ENCODE measurements at regions of chr1 and their contacts with region 1.

Region 1: GRCh38 chr1:167715157-167715999 is 6.4 kb upstream of the MPZL1 start:
- DNase-seq: peak; percentile 70 to 94 (median 83)
- ATAC-seq: peak; percentile 58 to 64 (median 61)
- H3K4me3 ChIP-seq: peak overlapping the region; percentile 70 to 91
- H3K4me3 Mint-ChIP-seq: peak overlapping the region; percentile 82 to 87 (median 83)
- H3K27ac ChIP-seq: peak overlapping the region; percentile 39
- H3K27ac Mint-ChIP-seq: peak overlapping the region; percentile 79 to 91
- H3K4me1 ChIP-seq: peaks cover 15 to 30% of the 10 kb centered on the region in 2 experiments
- H3K4me1 Mint-ChIP-seq: peaks cover 43 to 48% (median 46%) of the 10 kb centered on the region in 3 donors
- H3K27me3 ChIP-seq: no peaks in the 10 kb centered on the region
- H3K27me3 Mint-ChIP-seq: peaks cover 0 to 6% of the 10 kb centered on the region in 2 donors

Region 2: GRCh38 chr1:166838766-166839599 is 876.4 kb before region 1 on chr1 and contains the start of gene POGK:
- CTCF ChIA-PET with region 1: no interaction called
- POLR2A ChIA-PET with region 1: no interaction called
- DNase-seq: peak; percentile 47 to 88 (median 68)
- ATAC-seq: peak; percentile 92
- H3K4me3 ChIP-seq: peak within 1 kb of the TSS; percentile 61 to 76
- H3K4me3 Mint-ChIP-seq: peak within 1 kb of the TSS; percentile 86 to 94 (median 89)
- H3K27ac ChIP-seq: peak within 1 kb of the TSS; percentile 91
- H3K27ac Mint-ChIP-seq: peak within 1 kb of the TSS; percentile 97 to 98
- H3K4me1 ChIP-seq: peaks cover 10 to 38% of the 10 kb centered on the region in 2 experiments
- H3K4me1 Mint-ChIP-seq: peaks cover 45 to 50% (median 48%) of the 10 kb centered on the region in 3 donors
- H3K27me3 ChIP-seq: no peaks in the 10 kb centered on the region
- H3K27me3 Mint-ChIP-seq: no peaks in the 10 kb centered on the region
- total RNA-seq, gene POGK: 26.2 to 45.9 (median 43.2) TPM

Region 3: DNA sequence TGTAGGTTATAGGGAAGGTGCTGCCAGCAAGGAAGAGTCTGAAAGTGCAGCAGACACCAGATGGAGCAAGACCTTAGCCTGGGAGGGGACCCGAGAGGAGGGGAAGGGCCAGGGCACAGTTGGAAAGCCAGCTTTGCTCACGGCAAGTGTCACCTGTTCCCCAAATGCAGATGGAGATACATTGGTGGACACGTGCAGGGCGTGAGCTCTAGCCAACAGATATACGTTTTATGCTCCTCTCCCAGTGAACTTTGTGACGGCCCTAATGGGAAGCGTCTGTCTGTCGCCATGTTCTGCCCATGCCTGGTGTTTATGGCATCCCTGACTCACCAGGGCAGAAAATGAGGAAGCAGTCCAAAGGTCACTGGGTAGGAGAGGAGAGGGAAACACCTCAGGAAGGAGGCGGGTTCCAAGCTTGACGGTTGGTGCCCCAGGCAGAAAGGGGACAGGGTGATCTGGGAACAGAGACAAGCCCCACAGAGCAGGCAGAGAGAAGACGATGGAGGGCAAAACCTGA is 632.8 kb before region 1 on chr1:
- CTCF ChIA-PET with region 1: no interaction called
- POLR2A ChIA-PET with region 1: interaction called in 1 of 2 experiments, 10 read pairs
- DNase-seq: no peak
- ATAC-seq: no peak
- H3K4me3 ChIP-seq: no peak overlapping the region
- H3K4me3 Mint-ChIP-seq: no peak overlapping the region
- H3K27ac ChIP-seq: no peak overlapping the region
- H3K27ac Mint-ChIP-seq: no peak overlapping the region
- H3K4me1 ChIP-seq: peaks cover 10 to 11% of the 10 kb centered on the region in 2 experiments
- H3K4me1 Mint-ChIP-seq: peaks cover 14 to 23% (median 22%) of the 10 kb centered on the region in 3 donors
- H3K27me3 ChIP-seq: peaks cover 0 to 7% of the 10 kb centered on the region in 2 experiments
- H3K27me3 Mint-ChIP-seq: peaks cover 0 to 1% of the 10 kb centered on the region in 2 donors